Left cardiac atrium (tissue), 4 donors: ENCODE measurements at regions of chr1 and their contacts with region 1.

Region 1: GRCh38 chr1:14113841-14114567 is 414.0 kb downstream of the PRDM2 start:
- DNase-seq: peak; percentile 37
- ATAC-seq: peak; percentile 56 to 82

Region 2: DNA sequence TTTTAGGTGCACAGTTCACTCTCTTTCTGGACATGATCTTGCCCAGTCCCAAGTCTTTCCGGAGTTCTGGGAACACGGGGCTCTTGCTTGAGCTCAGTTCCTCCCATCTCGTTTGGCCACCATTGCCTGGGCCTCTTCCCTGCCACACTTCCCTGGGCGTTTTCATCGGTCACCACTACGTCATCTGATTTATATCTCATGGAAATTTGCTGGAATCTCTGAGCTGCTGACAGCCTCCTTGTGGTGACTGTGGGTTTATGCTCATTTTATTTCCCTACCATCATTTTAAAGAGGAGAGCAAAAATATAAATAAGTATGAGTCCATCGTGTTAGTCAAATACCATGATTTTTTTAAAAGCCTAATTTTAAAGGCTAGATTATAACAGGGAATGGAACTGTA is 35.4 kb after region 1 on chr1:
- intact Hi-C with region 1: no loop called
- DNase-seq: no peak
- ATAC-seq: no peak

Region 3: GRCh38 chr1:14733048-14733778 is 619.2 kb after region 1 on chr1:
- intact Hi-C with region 1: loop called (anchors 5 to 10 kb)
- DNase-seq: no peak
- ATAC-seq: peak in 1 of 2 donors; percentile 47

Region 4: DNA sequence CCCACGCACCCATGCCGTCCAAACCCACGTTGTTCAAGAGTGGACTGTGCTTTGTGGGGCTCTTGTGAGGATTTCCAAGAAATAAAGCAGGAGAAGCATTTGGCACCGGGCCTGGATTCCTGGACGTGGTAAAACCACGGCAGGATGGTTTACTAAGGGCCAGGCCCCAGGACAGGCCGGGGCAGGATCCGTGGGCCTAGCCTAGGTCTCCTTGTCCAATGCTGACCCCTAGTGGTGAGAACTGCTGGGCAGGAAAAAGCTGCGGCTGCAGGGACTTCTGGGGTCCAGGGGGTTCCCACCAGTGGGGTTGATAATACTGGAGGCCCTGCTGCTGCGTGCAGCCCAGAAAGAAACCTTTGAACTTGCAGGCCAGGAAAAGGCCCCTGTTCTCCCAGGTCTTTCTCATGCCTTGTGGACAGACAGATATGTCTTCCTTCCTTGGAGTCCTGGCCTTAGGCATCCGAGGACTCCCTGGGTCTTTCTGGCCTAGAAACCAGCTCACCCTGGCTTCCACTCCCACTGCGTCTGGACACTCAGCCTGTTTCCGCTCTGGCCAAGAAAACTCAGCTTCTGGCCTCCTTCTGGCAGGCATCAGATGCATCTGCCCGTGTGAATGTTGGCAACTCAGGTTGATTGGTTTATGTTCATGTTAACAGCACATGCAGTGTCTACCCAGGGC is 932.6 kb after region 1 on chr1:
- intact Hi-C with region 1: loop called in 1 of 2 experiments (anchors 10 kb)
- DNase-seq: peak; percentile 78
- ATAC-seq: peak; percentile 78 to 84

Region 5: DNA sequence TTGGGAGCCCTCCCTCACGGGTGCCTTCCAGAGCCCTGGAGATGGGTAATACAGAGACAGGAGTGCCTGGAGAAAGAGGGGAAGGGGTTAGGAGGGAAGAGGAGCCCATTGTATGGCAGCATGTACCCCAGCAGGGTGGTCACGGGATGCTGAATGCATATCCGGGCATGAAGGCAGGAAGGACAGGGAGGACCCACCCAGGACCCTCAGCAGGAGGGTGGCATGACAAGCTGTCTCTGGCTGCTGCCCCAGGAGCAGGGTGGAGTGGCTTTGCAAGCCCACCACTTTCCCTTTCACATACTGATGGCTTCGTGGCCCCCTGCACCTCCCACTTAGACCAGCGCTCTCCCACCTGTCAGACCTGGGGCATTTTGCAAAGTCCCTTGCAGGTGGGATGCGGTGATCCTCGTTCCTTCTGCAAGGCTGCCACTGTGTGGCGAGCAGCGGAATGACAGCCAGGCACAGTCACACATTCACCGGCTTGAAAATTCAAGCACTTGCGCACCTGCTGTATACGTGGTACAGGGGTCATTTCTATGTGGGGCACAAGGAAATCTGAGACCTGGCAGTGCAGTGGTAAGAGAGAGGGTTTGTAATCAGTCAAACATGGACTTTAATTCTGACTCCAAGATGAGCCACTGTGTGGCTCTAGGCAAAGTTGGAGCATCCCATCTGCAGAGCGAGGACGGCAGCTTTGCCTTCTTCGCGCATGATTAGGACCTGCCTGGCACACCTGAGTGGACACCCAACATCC is 986.3 kb after region 1 on chr1:
- intact Hi-C with region 1: loop called in 1 of 2 experiments (anchors 5 kb)
- DNase-seq: peak; percentile 46
- ATAC-seq: peak; percentile 62 to 64